HEK293T (cell line): ENCODE measurements at regions of chr10 and their contacts with region 1.

Region 1: DNA sequence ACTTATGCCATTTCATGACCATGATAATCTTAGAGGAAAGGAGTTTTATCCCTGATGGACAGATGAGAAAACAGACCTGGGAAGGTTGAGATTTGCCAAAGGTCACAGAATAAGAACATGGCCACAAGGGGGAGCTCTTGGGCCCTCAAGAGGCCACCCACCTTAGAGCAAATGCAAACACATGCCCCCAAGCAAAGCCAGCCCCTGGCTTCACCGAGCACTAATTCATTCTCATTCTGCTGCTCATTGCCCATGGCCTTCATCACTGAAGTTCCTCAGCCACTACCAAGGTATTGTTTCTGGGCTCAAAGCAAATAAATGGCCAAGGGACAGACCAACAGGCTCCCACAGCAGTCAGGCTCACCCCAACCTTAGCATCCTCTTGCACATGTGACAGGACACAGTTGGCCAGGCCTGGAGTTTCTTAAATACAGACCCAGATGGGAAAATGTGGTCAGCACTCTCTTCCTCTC is 44.2 kb downstream of the PDLIM1 start:
- DNase-seq: peak; percentile 82

Region 2: DNA sequence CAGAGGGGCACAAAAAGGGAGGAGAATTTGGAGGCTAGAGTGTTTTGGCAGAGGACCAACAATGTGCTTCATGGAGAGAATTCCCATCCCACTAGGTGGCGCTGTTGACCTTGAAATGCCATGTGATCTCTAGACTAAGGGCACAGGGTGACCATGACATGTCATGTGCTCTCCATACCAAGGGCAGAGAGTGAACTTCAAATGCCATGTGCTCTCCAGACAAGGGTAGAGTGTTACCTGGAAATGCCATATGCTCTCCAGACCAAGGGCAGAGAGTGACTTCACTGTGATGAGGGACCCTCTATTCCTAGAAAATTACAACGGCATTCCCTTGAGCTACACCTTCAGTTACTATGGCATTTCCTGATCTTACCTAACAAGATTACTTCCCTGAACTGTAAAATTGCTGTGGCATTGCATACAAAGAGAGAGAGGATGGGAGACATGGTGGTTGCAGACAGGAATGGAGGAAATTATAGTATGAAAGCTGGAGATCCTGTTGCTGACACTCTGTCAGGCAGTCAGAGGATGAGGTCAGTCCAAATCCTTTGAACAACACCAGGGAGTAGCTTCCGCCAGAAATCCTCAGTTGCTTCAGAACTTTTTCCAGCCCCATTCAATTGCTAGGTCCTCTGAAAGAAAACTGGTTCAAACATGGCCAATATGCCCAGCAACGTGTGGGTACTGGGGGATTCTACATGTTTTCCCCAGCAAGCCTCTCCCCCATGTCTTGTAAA is 113.4 kb before region 1 on chr10:
- CTCF ChIA-PET with region 1: interaction called, 10 read pairs
- POLR2A ChIA-PET with region 1: no interaction called
- DNase-seq: peak; percentile 75

Region 3: DNA sequence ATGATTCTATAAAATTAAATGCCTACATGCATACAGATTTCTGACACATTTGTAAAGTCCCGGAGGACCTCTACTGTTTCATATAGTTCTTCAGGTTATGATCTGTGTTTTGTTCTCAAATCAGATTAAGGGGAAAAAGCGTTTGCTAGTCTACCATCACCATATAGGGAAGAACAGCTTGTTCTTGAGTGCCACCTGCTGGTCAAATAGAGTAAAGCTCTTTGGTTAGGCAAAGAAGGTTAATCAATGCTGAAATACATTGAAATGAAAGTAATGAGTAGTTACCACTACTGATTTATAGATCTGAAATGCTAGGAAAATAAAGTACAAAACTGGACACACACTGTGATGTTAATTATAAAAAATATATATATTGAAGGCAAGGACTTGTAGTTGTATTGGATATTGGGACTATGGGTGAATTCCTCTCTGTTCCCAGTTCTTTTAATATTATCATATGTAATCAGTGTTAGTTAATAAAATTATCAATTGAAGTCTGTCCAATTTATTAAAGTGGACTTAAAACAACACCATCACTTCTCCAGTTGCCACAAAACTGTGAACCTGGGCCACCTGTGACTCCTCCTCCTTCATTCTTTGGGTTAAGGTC is 116.8 kb after region 1 on chr10:
- CTCF ChIA-PET with region 1: interaction called, 54 read pairs
- POLR2A ChIA-PET with region 1: interaction called, 3 read pairs
- DNase-seq: peak; percentile 73